Activated naive CD4-positive, alpha-beta T cell treated with anti-CD3 and anti-CD28 coated beads for 36 hours (primary cell): ENCODE measurements at regions of chr6 and their contacts with region 1.

Region 1: GRCh38 chr6:13454286-13455221 is 32.8 kb downstream of the GFOD1 start:
- DNase-seq: peak; percentile 86
- H3K4me3 Mint-ChIP-seq: peak overlapping the region; percentile 46
- H3K27ac Mint-ChIP-seq: peak overlapping the region; percentile 93
- H3K4me1 Mint-ChIP-seq: peaks cover 45% of the 10 kb centered on the region
- H3K27me3 Mint-ChIP-seq: no peaks in the 10 kb centered on the region

Region 2: DNA sequence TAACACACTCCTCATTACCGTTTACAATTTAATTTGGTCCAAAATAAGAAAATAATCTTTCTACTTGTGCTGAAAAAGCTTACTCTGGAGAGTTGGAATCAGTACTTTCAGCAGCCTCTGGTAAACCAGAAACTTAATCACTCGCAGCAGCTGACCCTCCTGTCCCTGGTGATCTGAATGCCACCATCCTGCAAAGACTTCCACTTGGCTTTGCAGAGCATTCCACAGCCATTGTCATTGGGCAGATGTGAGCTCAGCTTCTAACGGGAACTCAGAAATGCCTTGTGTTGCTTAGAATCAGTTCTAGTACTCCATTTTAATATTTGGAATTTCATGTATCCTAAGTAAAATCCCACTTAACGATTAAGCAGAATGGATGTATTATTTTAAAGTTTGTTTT is 678.3 kb before region 1 on chr6:
- CTCF ChIA-PET with region 1: no interaction called
- intact Hi-C with region 1: no loop called
- DNase-seq: no peak
- H3K4me3 Mint-ChIP-seq: no peak overlapping the region
- H3K27ac Mint-ChIP-seq: no peak overlapping the region
- H3K4me1 Mint-ChIP-seq: no peaks in the 10 kb centered on the region
- H3K27me3 Mint-ChIP-seq: peaks cover 4% of the 10 kb centered on the region

Region 3: DNA sequence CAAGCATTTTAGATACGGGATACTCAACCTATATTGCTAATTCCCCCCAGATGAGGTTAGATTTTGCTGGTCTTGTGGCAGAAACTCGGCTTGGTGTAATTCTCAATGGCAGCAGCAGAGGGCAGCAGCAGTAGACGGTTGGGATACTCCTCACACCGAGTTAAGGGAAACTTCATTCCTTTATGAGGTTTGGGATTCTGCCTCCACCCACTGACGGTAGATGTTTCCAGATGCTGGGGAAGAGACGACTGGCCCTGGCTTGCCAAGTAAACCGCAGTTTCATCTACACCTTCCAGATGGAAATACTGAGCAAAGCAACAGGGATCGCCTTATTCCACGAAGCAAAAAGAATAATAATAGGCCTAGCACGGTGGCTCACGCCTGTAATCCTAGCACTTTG is 118.0 kb before region 1 on chr6:
- CTCF ChIA-PET with region 1: interaction called, 3 read pairs
- intact Hi-C with region 1: loop called (anchors 1 kb)
- DNase-seq: peak; percentile 82
- H3K4me3 Mint-ChIP-seq: no peak overlapping the region
- H3K27ac Mint-ChIP-seq: no peak overlapping the region
- H3K4me1 Mint-ChIP-seq: peaks cover 8% of the 10 kb centered on the region
- H3K27me3 Mint-ChIP-seq: no peaks in the 10 kb centered on the region

Region 4: GRCh38 chr6:13427801-13428582 is 26.6 kb before region 1 on chr6:
- CTCF ChIA-PET with region 1: interaction called, 4 read pairs
- intact Hi-C with region 1: loop called (anchors 1 kb)
- DNase-seq: peak; percentile 90
- H3K4me3 Mint-ChIP-seq: peak overlapping the region; percentile 53
- H3K27ac Mint-ChIP-seq: peak overlapping the region; percentile 85
- H3K4me1 Mint-ChIP-seq: peaks cover 68% of the 10 kb centered on the region
- H3K27me3 Mint-ChIP-seq: no peaks in the 10 kb centered on the region

Region 5: DNA sequence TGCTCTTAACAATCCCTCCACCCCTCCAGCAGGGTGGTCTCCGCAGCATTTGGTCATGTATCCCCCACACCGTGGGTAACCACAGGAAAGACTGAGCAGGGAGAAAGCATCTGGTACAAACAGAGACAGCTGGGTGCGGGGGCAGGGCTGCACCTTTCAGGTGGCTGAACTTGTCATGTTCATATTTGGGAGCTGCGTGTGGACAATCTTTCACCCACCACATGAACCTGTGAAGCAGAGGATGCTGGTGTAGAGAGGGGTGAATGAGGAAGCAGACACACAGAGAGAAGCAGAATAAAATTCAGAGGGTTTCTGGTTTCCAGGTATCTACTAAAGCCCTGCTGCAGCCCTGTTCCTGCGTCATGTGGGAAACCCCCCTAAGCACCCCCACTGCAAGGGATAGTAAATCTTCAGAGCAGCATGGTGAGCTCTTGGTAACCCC is 24.0 kb after region 1 on chr6:
- CTCF ChIA-PET with region 1: interaction called, 3 read pairs
- intact Hi-C with region 1: loop called (anchors 2 kb)
- DNase-seq: no peak
- H3K4me3 Mint-ChIP-seq: no peak overlapping the region
- H3K27ac Mint-ChIP-seq: no peak overlapping the region
- H3K4me1 Mint-ChIP-seq: peaks cover 6% of the 10 kb centered on the region
- H3K27me3 Mint-ChIP-seq: no peaks in the 10 kb centered on the region

Region 6: DNA sequence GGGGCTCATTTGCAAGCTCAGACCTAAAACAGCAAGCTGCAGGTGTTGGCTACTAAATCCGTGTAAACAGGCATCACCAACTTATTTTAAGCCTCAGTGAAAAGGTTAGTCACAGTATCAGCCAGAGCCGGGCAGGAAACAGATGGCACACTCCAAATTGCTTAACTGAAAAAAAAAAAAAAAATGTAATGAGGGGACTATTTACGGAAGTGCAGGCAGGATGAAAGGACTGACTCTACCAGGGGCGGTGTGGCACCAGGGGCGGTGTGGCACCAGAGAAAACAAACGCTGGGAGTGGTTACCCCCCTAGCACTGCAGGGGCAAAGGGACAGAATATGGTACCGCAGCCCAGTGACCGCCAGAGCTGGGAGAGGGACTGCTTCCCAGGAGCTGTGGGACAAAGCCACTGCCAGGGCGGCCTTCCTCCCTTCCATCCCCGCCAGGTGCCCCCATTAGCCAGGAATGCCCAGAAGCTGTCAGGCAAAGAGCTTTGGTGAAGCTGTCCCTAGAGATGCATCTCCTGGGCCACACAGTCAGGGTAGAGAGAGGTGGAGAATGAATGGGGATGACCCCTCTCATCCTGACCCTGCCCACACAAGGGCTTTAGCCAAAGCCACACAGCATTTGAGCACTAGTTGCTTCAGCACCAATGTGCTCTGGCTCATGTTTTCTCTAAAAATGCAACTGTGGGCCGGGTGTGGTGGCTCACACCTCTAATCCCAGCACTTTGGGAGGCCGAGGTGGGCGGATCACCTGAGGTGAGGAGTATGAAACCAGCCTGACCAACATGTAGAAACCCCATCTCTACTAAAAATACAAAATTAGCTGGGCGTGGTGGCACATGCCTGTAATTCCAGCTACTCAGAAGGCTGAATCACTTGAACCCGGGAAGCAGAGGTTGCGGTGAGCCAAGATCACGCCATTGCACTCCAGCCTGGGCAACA is 72.4 kb after region 1 on chr6:
- CTCF ChIA-PET with region 1: no interaction called
- intact Hi-C with region 1: loop called (anchors 5 kb)
- DNase-seq: peak; percentile 60
- H3K4me3 Mint-ChIP-seq: no peak overlapping the region
- H3K27ac Mint-ChIP-seq: no peak overlapping the region
- H3K4me1 Mint-ChIP-seq: peaks cover 11% of the 10 kb centered on the region
- H3K27me3 Mint-ChIP-seq: no peaks in the 10 kb centered on the region

Region 7: DNA sequence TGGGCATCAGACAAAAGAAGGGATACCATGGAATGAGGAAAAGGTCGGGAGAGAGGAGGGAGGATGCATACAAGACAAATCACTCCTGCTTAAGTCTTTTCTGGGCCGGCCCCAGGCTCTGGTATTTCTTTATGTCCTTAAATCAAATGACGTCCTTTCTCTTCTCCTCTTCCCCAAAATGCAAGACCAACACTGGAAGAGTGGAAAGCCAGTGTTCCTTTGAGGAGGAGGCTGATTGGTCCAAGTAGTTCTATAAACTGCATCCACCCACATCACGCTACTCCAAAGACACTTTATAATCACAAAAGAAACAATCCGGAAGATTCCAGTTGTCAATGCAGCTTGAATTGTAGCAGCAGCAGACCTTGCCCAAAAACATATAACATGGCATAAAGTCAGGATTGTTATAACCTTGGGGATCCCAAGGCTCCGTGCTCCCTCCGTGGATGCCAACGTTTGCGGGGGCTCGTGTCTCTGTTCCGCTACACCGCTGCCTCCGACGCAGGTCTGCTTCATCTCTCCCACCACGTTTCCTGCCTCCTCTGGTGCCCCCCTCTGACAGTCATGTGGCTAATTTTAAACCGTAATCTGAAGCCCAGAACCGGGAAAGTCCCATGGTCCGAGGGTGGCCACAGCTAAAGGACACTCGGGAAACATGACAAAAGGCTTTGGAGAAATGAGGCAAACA is 312.7 kb after region 1 on chr6:
- CTCF ChIA-PET with region 1: no interaction called
- intact Hi-C with region 1: loop called (anchors 2 kb)
- DNase-seq: peak; percentile 71
- H3K4me3 Mint-ChIP-seq: peak overlapping the region; percentile 78
- H3K27ac Mint-ChIP-seq: no peak overlapping the region
- H3K4me1 Mint-ChIP-seq: peaks cover 43% of the 10 kb centered on the region
- H3K27me3 Mint-ChIP-seq: peaks cover 1% of the 10 kb centered on the region